ENCODE measurements at regions of chr2 and their contacts with region 1.

Region 1: GRCh38 chr2:63790913-63791312 is 50.8 kb upstream of the UGP2 start:
- DNase-seq: peak; percentile 91
- ATAC-seq: peak; percentile 85
- H3K4me3 ChIP-seq: no peak overlapping the region
- H3K27ac ChIP-seq: peak overlapping the region; percentile 12; the same call in 1 of the 2 replicates
- H3K4me1 ChIP-seq: peaks cover 16% of the 10 kb centered on the region
- H3K27me3 ChIP-seq: no peaks in the 10 kb centered on the region
- CTCF ChIP-seq: no peak
- POLR2A ChIP-seq: no peak
- RAD21 ChIP-seq: no peak

Region 2: GRCh38 chr2:62999905-63000304 is 791.0 kb before region 1 on chr2:
- CTCF ChIA-PET with region 1: no interaction called
- POLR2A ChIA-PET with region 1: no interaction called
- dilution Hi-C with region 1: no loop called
- in situ Hi-C with region 1: no loop called
- intact Hi-C with region 1: no loop called
- DNase-seq: no peak
- ATAC-seq: no peak; the same call in 1 of the 2 replicates
- H3K4me3 ChIP-seq: no peak overlapping the region
- H3K27ac ChIP-seq: no peak overlapping the region
- H3K4me1 ChIP-seq: no peaks in the 10 kb centered on the region
- H3K27me3 ChIP-seq: no peaks in the 10 kb centered on the region
- CTCF ChIP-seq: no peak
- POLR2A ChIP-seq: no peak
- RAD21 ChIP-seq: no peak

Region 3: DNA sequence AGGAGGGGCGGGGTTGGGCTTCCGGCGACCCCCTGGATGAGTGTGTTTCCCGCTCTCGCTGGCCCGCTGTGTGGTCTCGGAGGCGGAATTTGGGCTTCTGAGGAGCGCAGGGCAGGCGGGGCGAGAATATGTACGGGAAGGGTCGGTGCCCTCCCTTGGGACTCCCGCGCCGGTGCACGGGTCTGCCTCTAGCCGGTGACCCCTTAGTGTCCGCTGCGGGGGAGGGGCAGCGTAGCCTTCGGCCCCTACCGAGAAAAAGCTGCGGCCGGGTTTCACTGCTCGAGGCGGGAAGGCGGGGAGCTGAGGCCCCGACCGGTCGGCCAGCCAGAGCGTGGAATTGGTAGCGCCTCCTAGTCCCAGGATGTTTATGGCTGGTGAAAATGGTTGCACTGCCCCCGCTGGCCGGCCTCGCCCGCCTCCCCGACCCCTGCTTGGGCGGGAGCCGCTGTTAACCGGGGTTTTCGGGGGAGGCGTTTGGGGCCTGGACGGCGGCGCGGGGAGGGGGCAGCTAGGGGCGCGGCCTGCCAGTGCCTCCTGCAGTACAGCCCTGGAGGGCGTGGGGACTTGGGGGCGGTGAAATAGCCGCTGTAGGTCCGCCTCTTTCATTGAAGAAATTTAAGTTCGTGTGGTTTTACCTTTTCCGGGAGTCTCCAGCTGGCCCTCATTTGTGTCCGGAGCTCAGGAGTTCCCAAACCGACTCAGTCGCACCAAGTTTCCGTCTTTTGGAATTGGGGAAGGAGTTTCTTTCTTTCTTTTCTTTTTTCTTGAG is 50.5 kb after region 1 on chr2 and contains the start of gene UGP2:
- CTCF ChIA-PET with region 1: no interaction called
- POLR2A ChIA-PET with region 1: no interaction called
- dilution Hi-C with region 1: no loop called
- in situ Hi-C with region 1: no loop called
- intact Hi-C with region 1: loop called (anchors 5 kb)
- DNase-seq: peak; percentile 92
- ATAC-seq: peak; percentile 82
- H3K4me3 ChIP-seq: peak within 1 kb of the TSS; percentile 69
- H3K27ac ChIP-seq: peak within 1 kb of the TSS; percentile 90
- H3K4me1 ChIP-seq: peaks cover 6% of the 10 kb centered on the region
- H3K27me3 ChIP-seq: no peaks in the 10 kb centered on the region
- CTCF ChIP-seq: 0 out of 2 replicates have a peak, but pooled peaks have one; percentile 27
- POLR2A ChIP-seq: peak; percentile 93
- RAD21 ChIP-seq: no peak; the same call in 1 of the 2 replicates
- total RNA-seq, gene UGP2: 58.8 and 101 TPM in 2 replicates

Region 4: GRCh38 chr2:63881205-63881604 is 90.3 kb after region 1 on chr2:
- CTCF ChIA-PET with region 1: no interaction called
- POLR2A ChIA-PET with region 1: no interaction called
- dilution Hi-C with region 1: no loop called
- in situ Hi-C with region 1: no loop called
- intact Hi-C with region 1: no loop called
- DNase-seq: no peak
- ATAC-seq: no peak
- H3K4me3 ChIP-seq: no peak overlapping the region
- H3K27ac ChIP-seq: no peak overlapping the region
- H3K4me1 ChIP-seq: no peaks in the 10 kb centered on the region
- H3K27me3 ChIP-seq: no peaks in the 10 kb centered on the region
- CTCF ChIP-seq: no peak
- POLR2A ChIP-seq: no peak
- RAD21 ChIP-seq: no peak

Measured in IMR-90 (cell line).